ENCODE measurements at regions of chr12 and their contacts with region 1.

Region 1: GRCh38 chr12:121668750-121669520 is 519 bp downstream of the MORN3 start:
- DNase-seq: peak; percentile 80
- H3K4me3 Mint-ChIP-seq: no peak overlapping the region
- H3K27ac Mint-ChIP-seq: peak overlapping the region; percentile 63
- H3K4me1 Mint-ChIP-seq: peaks cover 58% of the 10 kb centered on the region
- H3K27me3 Mint-ChIP-seq: no peaks in the 10 kb centered on the region

Region 2: GRCh38 chr12:121499929-121500793 is 168.8 kb before region 1 on chr12:
- CTCF ChIA-PET with region 1: interaction called, 32 read pairs
- intact Hi-C with region 1: no loop called
- DNase-seq: peak; percentile 83
- H3K4me3 Mint-ChIP-seq: no peak overlapping the region
- H3K27ac Mint-ChIP-seq: no peak overlapping the region
- H3K4me1 Mint-ChIP-seq: peaks cover 9% of the 10 kb centered on the region
- H3K27me3 Mint-ChIP-seq: no peaks in the 10 kb centered on the region

Region 3: DNA sequence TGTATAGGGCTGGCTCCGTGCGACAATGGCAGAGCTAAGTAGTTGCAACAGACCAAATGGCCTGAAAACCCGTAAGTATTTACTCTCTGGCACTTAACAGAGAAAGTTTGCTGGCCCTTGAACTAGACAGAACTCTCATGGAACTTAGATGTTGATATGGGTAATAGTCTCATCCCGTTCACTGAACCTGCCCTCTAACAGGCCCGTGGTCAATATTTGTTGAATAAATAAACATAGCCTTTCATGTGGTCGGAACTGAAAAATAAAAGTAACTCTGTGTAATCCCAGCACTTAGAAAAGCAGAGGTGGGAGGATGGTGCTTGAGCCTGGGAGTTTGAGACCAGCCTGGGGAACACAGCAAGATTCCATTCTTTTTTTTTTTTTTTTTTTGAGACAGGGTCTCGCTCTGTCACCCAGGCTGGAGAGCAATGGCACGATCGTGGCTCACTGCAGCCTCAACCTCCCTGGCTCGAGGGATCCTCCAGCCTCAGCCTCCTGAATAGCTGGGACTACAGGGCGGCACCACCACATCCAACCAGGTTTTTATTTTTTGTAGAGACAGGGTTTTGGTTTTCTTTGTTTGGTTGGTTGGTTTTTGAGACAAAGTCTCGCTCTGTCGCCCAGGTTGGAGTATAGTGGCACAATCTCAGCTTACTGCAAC is 117.8 kb before region 1 on chr12:
- CTCF ChIA-PET with region 1: interaction called, 46 read pairs
- intact Hi-C with region 1: loop called (anchors 1 kb)
- DNase-seq: no peak
- H3K4me3 Mint-ChIP-seq: no peak overlapping the region
- H3K27ac Mint-ChIP-seq: no peak overlapping the region
- H3K4me1 Mint-ChIP-seq: peaks cover 4% of the 10 kb centered on the region
- H3K27me3 Mint-ChIP-seq: no peaks in the 10 kb centered on the region

Region 4: DNA sequence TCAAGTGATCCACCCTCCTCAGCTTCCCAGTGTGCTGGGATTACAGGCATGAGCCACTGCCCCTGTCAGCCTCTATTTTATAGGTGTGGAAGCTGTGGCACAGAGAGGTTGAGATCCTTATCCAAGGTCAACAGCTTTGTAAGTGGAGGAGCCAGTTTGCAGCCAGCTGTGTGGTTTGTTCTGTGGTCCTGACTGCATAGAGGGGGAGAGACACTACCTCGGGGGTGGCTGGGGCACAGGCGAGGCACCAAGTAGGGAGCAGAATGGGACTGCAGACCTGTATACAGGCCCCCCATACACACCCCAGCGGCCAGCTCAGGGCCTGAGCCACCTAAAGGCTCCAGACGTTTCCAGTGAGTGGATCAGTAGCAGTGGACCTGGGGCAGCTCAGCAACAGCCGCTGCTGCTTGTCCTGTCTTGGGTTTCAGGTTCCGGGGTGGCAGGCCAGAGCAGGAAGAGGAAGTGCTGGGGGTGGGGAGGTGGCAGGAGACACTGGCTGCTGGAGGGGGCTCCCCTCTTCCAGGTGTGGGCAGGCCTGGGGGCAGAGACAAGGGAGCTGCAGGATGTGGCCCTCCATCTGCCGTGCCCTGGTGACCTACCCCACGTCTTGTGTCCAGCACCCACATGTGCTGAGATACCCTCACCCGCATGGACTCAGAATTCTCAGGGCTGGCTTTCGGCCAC is 31.6 kb before region 1 on chr12:
- CTCF ChIA-PET with region 1: interaction called, 110 read pairs
- intact Hi-C with region 1: no loop called
- DNase-seq: peak; percentile 82
- H3K4me3 Mint-ChIP-seq: peak overlapping the region; percentile 66
- H3K27ac Mint-ChIP-seq: peak overlapping the region; percentile 94
- H3K4me1 Mint-ChIP-seq: peaks cover 51% of the 10 kb centered on the region
- H3K27me3 Mint-ChIP-seq: no peaks in the 10 kb centered on the region

Region 5: GRCh38 chr12:121657305-121658008 is 11.5 kb before region 1 on chr12:
- CTCF ChIA-PET with region 1: interaction called, 20 read pairs
- intact Hi-C with region 1: loop called (anchors 1 kb)
- DNase-seq: peak; percentile 36
- H3K4me3 Mint-ChIP-seq: no peak overlapping the region
- H3K27ac Mint-ChIP-seq: peak overlapping the region; percentile 5
- H3K4me1 Mint-ChIP-seq: peaks cover 53% of the 10 kb centered on the region
- H3K27me3 Mint-ChIP-seq: no peaks in the 10 kb centered on the region

Region 6: DNA sequence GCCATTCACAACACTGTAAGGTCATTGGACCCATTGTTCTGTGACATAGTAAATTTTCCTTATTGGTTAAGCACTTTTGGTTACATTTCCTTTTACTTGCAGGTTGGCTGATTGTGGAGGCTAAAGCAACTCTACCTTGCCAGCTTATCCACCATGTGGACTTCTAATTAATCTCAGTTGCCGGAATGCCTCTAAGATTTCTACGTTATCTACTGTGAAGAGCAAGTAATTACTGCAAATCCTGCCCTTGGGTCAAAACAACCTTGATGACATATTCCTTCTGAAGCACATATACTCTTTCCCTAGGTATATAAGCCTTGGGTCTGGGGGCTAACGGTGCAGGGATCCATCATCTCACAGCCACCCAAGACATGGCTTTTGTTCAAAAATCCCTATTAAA is 20.0 kb after region 1 on chr12:
- CTCF ChIA-PET with region 1: interaction called, 3 read pairs
- intact Hi-C with region 1: loop called (anchors 1 kb)
- DNase-seq: no peak
- H3K4me3 Mint-ChIP-seq: no peak overlapping the region
- H3K27ac Mint-ChIP-seq: no peak overlapping the region
- H3K4me1 Mint-ChIP-seq: peaks cover 6% of the 10 kb centered on the region
- H3K27me3 Mint-ChIP-seq: no peaks in the 10 kb centered on the region

Measured in activated naive CD4-positive, alpha-beta T cell treated with anti-CD3 and anti-CD28 coated beads for 36 hours (primary cell).